HEK293 (cell line): ENCODE measurements at regions of chr14 and their contacts with region 1.

Region 1: GRCh38 chr14:35229495-35230089 is 62.6 kb upstream of the PSMA6 start:
- H3K4me3 ChIP-seq: no peak overlapping the region
- H3K27ac ChIP-seq: no peak overlapping the region
- H3K4me1 ChIP-seq: no peaks in the 10 kb centered on the region
- CTCF ChIP-seq: no peak

Region 2: GRCh38 chr14:35292051-35292769 is 62.6 kb after region 1 on chr14 and contains the start of gene PSMA6:
- CTCF ChIA-PET with region 1: interaction called, 10 read pairs
- POLR2A ChIA-PET with region 1: interaction called, 5 read pairs
- H3K4me3 ChIP-seq: peak within 1 kb of the TSS; percentile 95
- H3K27ac ChIP-seq: peak within 1 kb of the TSS; percentile 80
- H3K4me1 ChIP-seq: peaks cover 12% of the 10 kb centered on the region
- CTCF ChIP-seq: no peak; the same call in 1 of the 2 replicates

Region 3: DNA sequence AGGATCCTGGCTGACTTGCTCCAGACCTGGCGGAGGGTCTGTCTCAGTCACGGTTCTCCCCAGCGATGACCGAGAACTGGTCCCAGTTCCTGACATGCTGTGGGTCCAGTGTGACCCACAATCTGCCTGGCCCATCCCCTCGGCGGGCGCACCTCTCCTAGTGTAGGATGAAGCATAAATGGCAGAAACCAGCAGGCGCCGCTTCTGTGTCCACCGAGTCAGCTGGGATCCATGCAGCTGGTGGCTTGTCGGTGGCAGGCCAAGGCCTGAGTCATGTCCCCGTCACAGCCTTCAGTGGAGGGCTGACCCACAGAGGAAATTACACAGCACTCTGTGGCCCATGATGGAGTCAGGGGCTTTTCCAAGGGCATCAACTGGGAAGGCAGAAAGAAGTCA is 136.5 kb after region 1 on chr14:
- CTCF ChIA-PET with region 1: no interaction called
- POLR2A ChIA-PET with region 1: no interaction called
- H3K4me3 ChIP-seq: no peak overlapping the region
- H3K27ac ChIP-seq: no peak overlapping the region
- H3K4me1 ChIP-seq: no peaks in the 10 kb centered on the region
- CTCF ChIP-seq: no peak

Region 4: DNA sequence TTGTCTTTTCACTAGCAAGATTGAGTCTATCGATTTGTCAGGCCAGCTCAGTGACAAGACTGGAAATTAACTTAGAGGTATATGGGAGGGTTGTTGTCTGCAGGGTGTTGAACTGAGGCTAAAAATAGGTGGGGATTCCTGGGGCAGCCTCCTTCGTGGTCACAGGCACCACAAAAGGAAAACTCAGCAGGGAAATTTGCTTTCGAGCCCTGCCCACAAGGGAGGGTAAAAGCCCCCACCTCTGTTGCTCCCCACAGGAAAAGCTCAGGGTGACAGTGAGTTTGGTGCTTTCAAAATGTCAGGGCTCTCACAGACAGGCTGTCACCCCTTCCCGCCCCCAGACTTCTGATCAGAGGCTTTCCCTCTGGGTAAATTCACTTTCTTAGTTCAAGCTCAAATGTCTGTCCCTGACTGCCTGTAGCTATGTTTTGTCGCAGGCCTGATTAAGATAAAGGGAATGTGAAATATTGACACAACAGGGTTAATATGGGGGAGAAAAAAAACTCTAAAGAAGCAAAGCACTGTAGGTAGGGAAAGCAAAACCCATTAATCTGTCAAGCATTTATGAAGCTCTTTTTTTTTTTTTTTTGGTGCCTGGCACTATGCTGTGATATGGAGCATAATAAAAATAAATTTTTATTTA is 186.6 kb after region 1 on chr14:
- CTCF ChIA-PET with region 1: interaction called, 10 read pairs
- POLR2A ChIA-PET with region 1: no interaction called
- H3K4me3 ChIP-seq: no peak overlapping the region
- H3K27ac ChIP-seq: no peak overlapping the region
- H3K4me1 ChIP-seq: peaks cover 3% of the 10 kb centered on the region
- CTCF ChIP-seq: no peak